Psoas muscle (tissue), 8 donors: ENCODE measurements at regions of chr1 and their contacts with region 1.

Region 1: DNA sequence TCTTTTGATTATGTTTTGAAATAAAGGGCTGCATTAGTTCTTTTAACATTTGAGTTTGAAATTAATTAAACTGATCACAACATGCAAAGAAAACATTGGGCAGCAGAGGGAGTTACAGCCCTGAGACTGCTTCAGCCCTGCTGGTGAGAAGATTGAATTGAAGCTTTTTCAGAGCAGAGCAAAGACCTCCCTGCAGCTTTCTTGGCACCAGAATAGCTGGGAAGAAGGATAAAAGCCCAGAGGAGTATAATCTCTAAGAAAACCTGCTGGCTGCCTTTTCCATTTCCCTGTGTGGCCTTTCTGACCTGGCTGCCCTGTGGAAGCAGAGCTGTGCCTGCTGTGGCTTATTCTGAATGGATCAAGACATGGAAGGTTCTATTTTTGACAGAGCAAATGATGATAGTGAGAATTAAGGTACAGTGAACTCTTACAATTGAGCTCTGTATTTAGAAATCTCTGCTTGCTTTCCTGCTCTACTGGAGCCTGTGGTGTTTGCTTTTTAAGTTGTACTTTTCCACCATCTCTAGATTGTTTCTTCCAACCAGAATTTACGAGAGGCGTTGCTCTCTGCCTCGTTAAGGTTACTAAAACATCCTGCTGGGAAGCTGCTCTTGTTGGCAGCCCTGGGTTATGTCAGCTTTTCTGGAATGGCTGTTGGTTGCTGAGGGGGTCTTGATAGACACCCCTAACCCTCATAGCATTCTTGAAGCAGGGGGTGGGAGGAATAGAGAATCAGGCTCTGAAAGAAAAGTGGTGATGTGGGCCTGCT is 9.9 kb downstream of the SNRPE start:
- DNase-seq: no peak
- ATAC-seq: peak; percentile 41 to 80 (median 53)
- H3K4me3 ChIP-seq: no peak overlapping the region
- H3K27ac ChIP-seq: no peak overlapping the region
- H3K4me1 ChIP-seq: no peaks in the 10 kb centered on the region
- H3K27me3 ChIP-seq: no peaks in the 10 kb centered on the region
- CTCF ChIP-seq: peak; percentile 72

Region 2: DNA sequence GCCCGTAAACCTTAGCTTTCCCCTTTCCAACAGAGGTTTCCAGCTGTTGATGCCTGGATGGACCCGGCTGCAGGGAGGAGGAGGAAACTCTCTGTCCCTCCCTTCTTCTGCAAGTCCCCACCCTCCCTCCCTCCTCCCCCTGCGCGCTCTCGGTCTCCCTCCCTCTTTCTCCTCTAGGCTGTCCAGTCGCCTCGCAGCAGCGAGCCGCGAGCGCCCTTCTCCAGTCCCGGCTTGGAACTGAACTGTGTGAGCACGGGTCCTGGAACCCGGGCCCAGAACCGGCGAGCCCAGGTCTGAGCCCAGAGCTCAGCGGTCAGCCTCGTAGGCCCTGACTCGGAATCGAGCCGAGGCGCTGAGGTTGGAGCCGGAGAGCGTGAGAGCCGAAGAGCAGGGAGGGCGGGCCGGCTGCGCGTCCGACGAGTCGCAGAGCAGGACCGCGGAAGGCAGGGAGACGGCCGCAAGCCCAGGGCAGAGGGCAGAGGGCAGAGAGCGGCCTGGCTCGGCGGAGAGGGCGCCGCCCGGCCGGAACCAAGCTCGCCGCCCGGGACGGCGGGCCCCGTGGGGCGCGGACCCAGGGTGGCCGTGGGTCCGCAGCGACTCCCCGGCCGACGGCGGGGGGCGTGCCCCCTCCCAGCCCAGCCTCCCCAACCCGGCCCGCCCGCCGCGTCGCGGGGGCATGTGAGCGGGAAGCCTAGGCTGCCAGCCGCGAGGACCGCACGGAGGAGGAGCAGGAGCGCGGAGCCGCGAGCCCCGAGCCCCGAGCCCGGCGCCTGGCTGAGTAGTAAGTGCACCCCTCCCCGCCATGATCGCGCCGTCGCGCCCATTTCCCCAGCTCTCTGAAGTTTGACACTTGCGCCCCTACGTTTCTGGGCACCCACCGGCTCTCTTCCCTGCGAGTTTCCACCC is 201.9 kb after region 1 on chr1 and contains the start of gene SOX13:
- intact Hi-C with region 1: loop called in 1 of 2 experiments (anchors 5 kb)
- DNase-seq: peak; percentile 85 to 93
- ATAC-seq: peak; percentile 71 to 85 (median 83)
- H3K4me3 ChIP-seq: peak within 1 kb of the TSS; percentile 76
- H3K27ac ChIP-seq: peak within 1 kb of the TSS; percentile 78
- H3K4me1 ChIP-seq: peaks cover 28% of the 10 kb centered on the region
- H3K27me3 ChIP-seq: no peaks in the 10 kb centered on the region
- CTCF ChIP-seq: no peak
- total RNA-seq, gene SOX13: 8.5 to 19.6 (median 9.4) TPM

Region 3: DNA sequence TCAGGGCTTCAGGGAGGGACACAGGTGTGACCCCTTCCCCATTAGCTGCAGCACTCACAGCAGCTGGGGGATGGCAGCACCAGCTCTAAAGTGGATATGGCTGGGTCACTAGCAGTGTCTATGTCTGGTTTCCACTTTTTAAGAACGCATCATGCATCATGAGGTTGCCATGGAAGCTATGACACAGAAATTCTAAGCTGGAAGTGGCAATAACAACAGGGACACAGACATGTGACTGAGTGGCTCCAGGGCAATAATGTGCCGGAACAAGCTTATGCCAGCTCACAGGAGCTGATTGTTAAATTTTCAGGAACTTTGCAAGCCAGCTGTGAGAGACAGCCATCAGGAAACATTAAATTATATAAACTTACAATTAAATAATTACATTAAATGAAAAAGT is 948.2 kb after region 1 on chr1:
- intact Hi-C with region 1: no loop called
- DNase-seq: no peak
- ATAC-seq: no peak
- H3K4me3 ChIP-seq: no peak overlapping the region
- H3K27ac ChIP-seq: no peak overlapping the region
- H3K4me1 ChIP-seq: peaks cover 7% of the 10 kb centered on the region
- H3K27me3 ChIP-seq: no peaks in the 10 kb centered on the region
- CTCF ChIP-seq: no peak